K562 (cell line): ENCODE measurements at regions of chr12 and their contacts with region 1.

Region 1: DNA sequence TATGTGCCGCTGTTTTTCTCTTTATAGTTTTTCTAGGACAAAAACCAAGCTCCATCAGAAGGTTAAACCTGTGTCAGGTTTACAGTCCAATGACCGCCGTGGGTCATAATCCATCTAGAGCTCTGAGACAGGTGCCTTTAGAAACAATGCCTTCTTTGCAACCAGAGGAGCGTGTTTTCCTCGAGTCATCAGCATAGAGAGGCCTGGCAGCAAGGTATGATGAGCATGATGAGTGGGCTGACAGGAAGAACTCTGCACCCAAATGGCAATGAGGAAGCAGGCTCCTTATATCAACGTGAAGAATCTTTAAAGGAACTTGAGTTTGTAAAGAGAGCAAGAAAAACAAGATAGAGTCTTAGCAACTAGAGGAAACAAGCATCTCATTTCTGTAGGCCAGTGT is 60.5 kb upstream of the NUDT4 start:
- DNase-seq: peak in 2 of 4 experiments; percentile 27 to 67
- ATAC-seq: peak; percentile 1; the same call in 1 of the 3 replicates
- H3K4me3 ChIP-seq: no peak overlapping the region
- H3K27ac ChIP-seq: peak overlapping the region; percentile 96
- H3K4me1 ChIP-seq: peaks cover 26 to 60% of the 10 kb centered on the region in 2 experiments
- H3K27me3 ChIP-seq: no peaks in the 10 kb centered on the region
- CTCF ChIP-seq: no peak
- EP300 ChIP-seq: peak; percentile 37
- POLR2A ChIP-seq: no peak
- RAD21 ChIP-seq: no peak

Region 2: GRCh38 chr12:92784795-92785562 is 532.2 kb before region 1 on chr12:
- CTCF ChIA-PET with region 1: no interaction called
- POLR2A ChIA-PET with region 1: no interaction called
- in situ Hi-C with region 1: no loop called
- intact Hi-C with region 1: loop called (anchors 10 kb)
- DNase-seq: peak; percentile 67 to 77 (median 72)
- ATAC-seq: peak; percentile 100
- H3K4me3 ChIP-seq: no peak overlapping the region
- H3K27ac ChIP-seq: no peak overlapping the region
- H3K4me1 ChIP-seq: no peaks in the 10 kb centered on the region
- H3K27me3 ChIP-seq: no peaks in the 10 kb centered on the region
- CTCF ChIP-seq: peak; percentile 57 to 78 (median 62)
- EP300 ChIP-seq: no peak
- POLR2A ChIP-seq: no peak
- RAD21 ChIP-seq: peak; percentile 87 to 92

Region 3: GRCh38 chr12:93025145-93025805 is 292.0 kb before region 1 on chr12:
- CTCF ChIA-PET with region 1: no interaction called
- POLR2A ChIA-PET with region 1: no interaction called
- in situ Hi-C with region 1: no loop called
- intact Hi-C with region 1: loop called (anchors 5 kb)
- DNase-seq: peak; percentile 28 to 74 (median 44)
- ATAC-seq: peak; percentile 82
- H3K4me3 ChIP-seq: no peak overlapping the region
- H3K27ac ChIP-seq: no peak overlapping the region
- H3K4me1 ChIP-seq: peaks cover 0 to 23% of the 10 kb centered on the region in 2 experiments; a peak in 3 of 5 replicates
- H3K27me3 ChIP-seq: no peaks in the 10 kb centered on the region
- CTCF ChIP-seq: peak; percentile 58 to 82 (median 66)
- EP300 ChIP-seq: no peak
- POLR2A ChIP-seq: no peak
- RAD21 ChIP-seq: peak; percentile 78 to 93

Region 4: DNA sequence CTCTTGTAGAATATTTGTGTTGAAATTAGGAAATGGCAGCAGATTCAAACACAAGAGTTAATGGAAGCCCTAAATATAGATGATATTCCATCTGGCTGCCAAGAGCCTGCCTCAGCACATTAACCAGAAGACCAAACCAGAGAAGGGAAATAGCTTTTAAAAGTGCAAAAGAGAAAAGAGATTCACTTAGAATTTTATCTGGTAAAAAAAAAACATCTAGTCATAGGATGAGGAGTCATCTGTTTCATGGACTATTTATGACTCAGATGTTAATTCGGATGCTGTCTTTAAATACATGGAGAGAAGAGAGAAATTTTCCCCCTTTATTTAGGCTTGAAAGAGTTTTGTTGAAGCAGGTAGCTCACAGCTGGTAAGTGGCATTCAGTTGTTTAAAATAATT is 141.1 kb before region 1 on chr12:
- CTCF ChIA-PET with region 1: no interaction called
- POLR2A ChIA-PET with region 1: interaction called, 3 read pairs
- in situ Hi-C with region 1: no loop called
- intact Hi-C with region 1: loop called (anchors 1 kb)
- DNase-seq: no peak
- ATAC-seq: no peak
- H3K4me3 ChIP-seq: no peak overlapping the region
- H3K27ac ChIP-seq: no peak overlapping the region
- H3K4me1 ChIP-seq: peaks cover 0 to 5% of the 10 kb centered on the region in 2 experiments; a peak in 2 of 5 replicates
- H3K27me3 ChIP-seq: no peaks in the 10 kb centered on the region
- CTCF ChIP-seq: no peak
- EP300 ChIP-seq: no peak
- POLR2A ChIP-seq: no peak
- RAD21 ChIP-seq: no peak

Region 5: DNA sequence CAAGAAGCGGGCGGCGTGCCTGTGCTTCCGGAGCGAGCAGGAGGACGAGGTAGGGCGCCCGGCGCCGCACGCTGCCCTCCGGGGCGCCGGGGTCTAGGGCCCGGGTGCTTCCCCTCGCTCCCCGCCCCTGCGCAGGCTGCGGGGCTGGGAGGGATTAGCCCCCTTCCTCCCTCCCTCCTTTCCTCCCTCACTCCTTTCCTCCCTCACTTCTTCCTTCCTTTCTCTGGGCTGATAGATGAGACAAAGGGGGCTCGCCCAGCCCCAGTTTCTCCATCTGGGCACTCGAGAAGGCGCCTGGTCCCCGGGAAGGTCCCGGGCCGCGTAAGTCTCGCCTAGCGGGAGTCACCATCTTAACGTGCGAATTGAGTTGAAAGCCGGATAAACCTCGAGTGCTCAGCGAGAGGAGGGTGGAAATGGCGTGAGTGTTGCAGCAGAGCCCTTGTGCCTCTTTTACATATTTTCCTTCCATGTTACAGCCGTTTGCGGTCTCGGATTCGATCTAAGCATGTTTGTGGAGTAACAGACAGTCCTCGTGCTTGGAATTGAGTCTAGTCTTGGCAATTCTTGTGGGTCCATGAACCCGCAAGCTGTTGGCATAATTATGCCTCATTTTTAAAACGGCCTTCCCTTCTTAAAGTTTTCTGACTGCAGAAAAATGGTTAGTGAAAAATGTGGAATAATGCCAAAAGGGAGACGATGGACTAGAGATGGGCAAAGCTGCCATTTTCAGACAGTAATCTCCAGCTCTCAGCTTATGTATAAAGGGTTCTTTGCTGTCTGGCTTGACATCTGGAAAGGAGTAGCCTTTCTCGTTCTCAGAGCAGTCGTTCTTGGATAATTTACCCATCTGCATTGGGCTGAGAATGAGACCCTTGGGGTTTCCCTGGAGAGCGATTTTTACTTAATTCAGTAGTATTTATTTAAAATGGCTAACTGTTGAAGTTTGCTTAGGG is 61.4 kb after region 1 on chr12:
- CTCF ChIA-PET with region 1: no interaction called
- POLR2A ChIA-PET with region 1: interaction called, 24 read pairs
- in situ Hi-C with region 1: no loop called
- intact Hi-C with region 1: loop called (anchors 1 kb)
- DNase-seq: peak; percentile 39 to 68 (median 57)
- ATAC-seq: peak; percentile 2
- H3K4me3 ChIP-seq: peak overlapping the region; percentile 97
- H3K27ac ChIP-seq: peak overlapping the region; percentile 88
- H3K4me1 ChIP-seq: peaks cover 14 to 19% of the 10 kb centered on the region in 2 experiments; a peak in 4 of 5 replicates
- H3K27me3 ChIP-seq: no peaks in the 10 kb centered on the region
- CTCF ChIP-seq: no peak
- EP300 ChIP-seq: no peak
- POLR2A ChIP-seq: no peak; the same call in 1 of the 2 replicates
- RAD21 ChIP-seq: no peak